Astrocyte of the spinal cord (primary cell): ENCODE measurements at regions of chr4 and their contacts with region 1.

Region 1: GRCh38 chr4:176789955-176790354 is 2.8 kb downstream of the VEGFC start:
- DNase-seq: peak; percentile 80
- H3K4me3 ChIP-seq: peak overlapping the region; percentile 88
- CTCF ChIP-seq: peak; percentile 73

Region 2: DNA sequence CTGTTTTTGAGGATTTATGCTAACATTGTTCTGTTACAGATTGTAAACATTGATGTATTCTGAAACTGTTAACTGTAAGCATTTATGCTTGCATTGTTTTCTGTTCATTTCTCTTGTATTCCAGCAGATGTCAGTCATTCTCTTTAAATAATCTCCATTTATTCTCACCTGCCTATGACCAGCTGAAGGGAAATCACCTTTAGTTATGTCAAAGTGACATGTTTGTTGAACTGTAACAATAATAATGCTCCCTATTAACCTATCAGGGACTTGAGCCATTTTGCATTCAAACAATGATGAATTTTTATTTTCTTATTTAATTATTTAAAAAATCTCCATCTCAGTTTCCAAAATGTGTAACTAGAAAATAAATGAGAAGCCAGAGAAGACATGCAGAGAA is 412.2 kb before region 1 on chr4:
- in situ Hi-C with region 1: loop called (anchors 25 kb)
- DNase-seq: peak; percentile 52
- H3K4me3 ChIP-seq: no peak overlapping the region
- CTCF ChIP-seq: peak; percentile 42